A549 (cell line): ENCODE measurements at regions of chr17 and their contacts with region 1.

Region 1: GRCh38 chr17:57243171-57243948 is 13.0 kb upstream of the MSI2 start:
- DNase-seq: peak; percentile 77 to 88
- ATAC-seq: peak; percentile 83 to 95
- H3K4me3 ChIP-seq: no peak overlapping the region
- H3K27ac ChIP-seq: peak overlapping the region; percentile 15 to 47; a peak in 3 of 6 replicates
- H3K4me1 ChIP-seq: peaks cover 8% of the 10 kb centered on the region; the same call in 1 of the 3 replicates
- CTCF ChIP-seq: peak; percentile 100
- EP300 ChIP-seq: no peak
- POLR2A ChIP-seq: no peak
- RAD21 ChIP-seq: peak; percentile 99

Region 2: GRCh38 chr17:56457501-56457900 is 785.9 kb before region 1 on chr17:
- CTCF ChIA-PET with region 1: no interaction called
- POLR2A ChIA-PET with region 1: no interaction called
- DNase-seq: no peak
- ATAC-seq: no peak
- H3K4me3 ChIP-seq: no peak overlapping the region
- H3K27ac ChIP-seq: no peak overlapping the region
- H3K4me1 ChIP-seq: no peaks in the 10 kb centered on the region
- CTCF ChIP-seq: no peak
- EP300 ChIP-seq: no peak
- POLR2A ChIP-seq: no peak
- RAD21 ChIP-seq: no peak

Region 3: DNA sequence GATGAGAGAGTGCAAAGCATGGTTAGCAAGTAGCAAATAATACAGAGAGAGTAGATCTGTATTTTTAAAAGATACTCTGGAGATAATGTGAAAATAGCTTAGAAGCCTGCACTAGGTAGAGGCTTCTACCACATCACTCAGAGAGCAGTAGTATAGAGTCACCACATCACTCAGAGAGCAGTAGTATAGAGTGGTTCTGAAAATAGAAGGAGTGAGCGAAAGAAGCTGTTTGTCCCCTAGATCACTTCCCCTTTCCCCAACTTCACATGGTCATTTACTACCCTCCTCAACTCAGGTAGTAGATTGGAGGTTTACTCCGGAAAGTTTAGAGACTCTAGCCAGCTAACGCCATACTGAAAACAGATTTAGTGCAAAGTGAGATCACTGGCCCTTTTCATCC is 392.4 kb before region 1 on chr17:
- CTCF ChIA-PET with region 1: no interaction called
- POLR2A ChIA-PET with region 1: no interaction called
- DNase-seq: no peak
- ATAC-seq: 0 out of 6 replicates have a peak, but pooled peaks of 1 of the 2 experiments have one; percentile 39
- H3K4me3 ChIP-seq: no peak overlapping the region
- H3K27ac ChIP-seq: no peak overlapping the region
- H3K4me1 ChIP-seq: no peaks in the 10 kb centered on the region
- CTCF ChIP-seq: no peak
- EP300 ChIP-seq: no peak
- POLR2A ChIP-seq: no peak
- RAD21 ChIP-seq: no peak

Region 4: DNA sequence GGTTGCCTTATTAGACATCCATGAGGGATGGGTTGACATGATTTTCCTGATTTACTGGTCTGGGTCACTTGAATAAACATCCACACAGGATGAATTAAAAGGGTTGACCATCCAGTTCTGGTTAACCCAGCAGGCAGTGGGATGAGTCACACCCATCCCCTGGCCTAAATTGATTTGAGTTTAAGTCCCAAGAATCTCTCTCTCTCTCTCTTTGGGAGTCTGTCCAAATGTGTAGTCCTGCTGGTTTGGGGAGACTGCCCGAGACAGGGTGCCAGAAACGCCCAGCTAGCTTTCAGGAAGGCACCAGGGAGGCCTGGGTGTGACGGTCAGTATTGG is 226.6 kb before region 1 on chr17:
- CTCF ChIA-PET with region 1: no interaction called
- POLR2A ChIA-PET with region 1: no interaction called
- DNase-seq: no peak
- ATAC-seq: no peak
- H3K4me3 ChIP-seq: no peak overlapping the region
- H3K27ac ChIP-seq: no peak overlapping the region
- H3K4me1 ChIP-seq: peaks cover 7% of the 10 kb centered on the region
- CTCF ChIP-seq: no peak
- EP300 ChIP-seq: no peak
- POLR2A ChIP-seq: no peak
- RAD21 ChIP-seq: no peak

Region 5: GRCh38 chr17:57114085-57114673 is 129.2 kb before region 1 on chr17:
- CTCF ChIA-PET with region 1: no interaction called
- POLR2A ChIA-PET with region 1: no interaction called
- DNase-seq: peak; percentile 57 to 76
- ATAC-seq: peak; percentile 40 to 87; a peak in 3 of 6 replicates
- H3K4me3 ChIP-seq: no peak overlapping the region
- H3K27ac ChIP-seq: no peak overlapping the region
- H3K4me1 ChIP-seq: 0 out of 3 replicates have a peak, but pooled peaks cover under 1% of the 10 kb centered on the region
- CTCF ChIP-seq: peak; percentile 65
- EP300 ChIP-seq: no peak
- POLR2A ChIP-seq: no peak
- RAD21 ChIP-seq: peak; percentile 59 to 74

Region 6: GRCh38 chr17:57130761-57131461 is 112.4 kb before region 1 on chr17:
- CTCF ChIA-PET with region 1: interaction called, 23 read pairs
- POLR2A ChIA-PET with region 1: no interaction called
- DNase-seq: peak; percentile 82 to 99
- ATAC-seq: peak; percentile 95 to 96
- H3K4me3 ChIP-seq: peak overlapping the region; percentile 38
- H3K27ac ChIP-seq: peak overlapping the region; percentile 66 to 84
- H3K4me1 ChIP-seq: no peaks in the 10 kb centered on the region
- CTCF ChIP-seq: peak; percentile 99
- EP300 ChIP-seq: no peak
- POLR2A ChIP-seq: no peak
- RAD21 ChIP-seq: peak; percentile 92 to 100

Region 7: GRCh38 chr17:57271821-57272220 is 28.5 kb after region 1 on chr17:
- CTCF ChIA-PET with region 1: interaction called, 33 read pairs
- POLR2A ChIA-PET with region 1: no interaction called
- DNase-seq: no peak
- ATAC-seq: no peak
- H3K4me3 ChIP-seq: no peak overlapping the region
- H3K27ac ChIP-seq: no peak overlapping the region
- H3K4me1 ChIP-seq: no peaks in the 10 kb centered on the region
- CTCF ChIP-seq: no peak
- EP300 ChIP-seq: no peak
- POLR2A ChIP-seq: no peak
- RAD21 ChIP-seq: no peak

Region 8: GRCh38 chr17:57401556-57402488 is 158.5 kb after region 1 on chr17:
- CTCF ChIA-PET with region 1: interaction called, 37 read pairs
- POLR2A ChIA-PET with region 1: no interaction called
- DNase-seq: peak; percentile 29 to 47
- ATAC-seq: peak; percentile 27 to 71; a peak in 3 of 6 replicates
- H3K4me3 ChIP-seq: no peak overlapping the region
- H3K27ac ChIP-seq: peak overlapping the region; percentile 9 to 62; a peak in 4 of 6 replicates
- H3K4me1 ChIP-seq: peaks cover 27% of the 10 kb centered on the region
- CTCF ChIP-seq: 0 out of 3 replicates have a peak, but pooled peaks have one; percentile 11
- EP300 ChIP-seq: no peak
- POLR2A ChIP-seq: no peak
- RAD21 ChIP-seq: peak; percentile 31 to 48; a peak in 3 of 5 replicates

Region 9: DNA sequence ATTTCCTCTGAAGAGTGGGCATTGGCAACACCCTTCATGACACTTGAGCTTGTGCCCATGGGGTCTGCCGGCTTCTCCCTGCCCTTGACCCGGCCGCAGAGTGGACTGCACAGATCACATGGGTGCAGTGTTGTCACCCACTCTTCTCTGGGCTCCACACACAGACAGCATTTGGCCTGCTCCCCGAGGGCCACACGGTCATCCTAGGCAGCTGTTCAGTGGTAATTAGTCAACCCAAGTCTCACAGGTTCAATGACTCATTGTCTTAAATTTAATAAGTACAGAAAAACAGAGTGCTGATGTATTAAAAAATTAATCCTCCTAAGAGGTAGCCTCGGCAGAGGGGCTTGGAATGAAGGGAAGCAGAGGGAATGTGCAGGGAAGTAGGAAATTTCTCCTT is 217.7 kb after region 1 on chr17:
- CTCF ChIA-PET with region 1: interaction called, 12 read pairs
- POLR2A ChIA-PET with region 1: no interaction called
- DNase-seq: no peak
- ATAC-seq: no peak
- H3K4me3 ChIP-seq: no peak overlapping the region
- H3K27ac ChIP-seq: peak overlapping the region; percentile 78 to 85
- H3K4me1 ChIP-seq: peaks cover 59% of the 10 kb centered on the region
- CTCF ChIP-seq: no peak
- EP300 ChIP-seq: no peak
- POLR2A ChIP-seq: no peak
- RAD21 ChIP-seq: no peak

Region 10: DNA sequence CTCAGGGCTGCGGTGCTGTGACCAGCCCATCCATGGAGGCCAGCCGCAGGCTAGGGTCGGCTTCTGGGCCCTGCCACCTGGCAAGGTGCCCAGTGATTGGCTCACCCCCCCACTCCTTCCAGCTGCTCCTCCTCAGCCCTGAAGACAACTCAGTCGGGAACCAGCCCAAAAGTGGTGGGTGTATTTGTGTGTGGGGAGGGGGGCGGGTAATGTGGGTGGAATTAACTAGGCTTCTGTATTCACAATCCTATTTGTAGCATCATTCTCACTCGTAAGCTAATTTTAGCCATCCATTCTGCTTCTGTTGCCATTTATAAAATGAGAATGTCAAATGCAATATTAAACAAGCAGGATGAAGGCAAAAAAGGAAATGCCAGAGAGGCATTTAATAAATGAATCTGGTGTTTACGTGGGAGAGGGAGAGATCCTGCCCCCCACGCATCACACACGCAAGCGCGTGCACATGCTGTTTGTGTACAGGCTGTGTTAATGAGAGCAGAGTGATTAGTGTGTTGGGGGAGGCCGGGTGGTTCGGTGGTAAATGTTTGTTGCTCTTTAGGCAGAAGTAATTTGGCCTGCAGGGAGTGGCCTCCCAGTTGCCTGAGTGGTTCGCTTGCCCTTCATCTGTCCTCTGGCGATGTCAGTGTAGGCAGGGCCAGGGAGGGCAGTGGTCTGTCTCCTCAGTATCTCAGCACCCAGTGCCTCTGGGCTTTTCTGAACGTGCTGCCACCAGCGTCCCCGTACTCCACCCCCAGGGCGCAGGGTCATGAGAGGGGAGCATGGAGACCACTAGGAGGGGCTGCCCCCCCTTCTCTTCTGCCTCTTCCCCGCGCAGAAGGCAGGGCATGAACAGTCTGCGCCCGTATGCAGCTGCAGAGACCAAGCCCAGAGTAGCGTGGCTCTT is 361.7 kb after region 1 on chr17:
- CTCF ChIA-PET with region 1: interaction called, 12 read pairs
- POLR2A ChIA-PET with region 1: no interaction called
- DNase-seq: no peak
- ATAC-seq: no peak; a peak in 1 of 6 replicates
- H3K4me3 ChIP-seq: no peak overlapping the region
- H3K27ac ChIP-seq: no peak overlapping the region
- H3K4me1 ChIP-seq: peaks cover 20% of the 10 kb centered on the region
- CTCF ChIP-seq: no peak
- EP300 ChIP-seq: no peak
- POLR2A ChIP-seq: no peak
- RAD21 ChIP-seq: no peak

Region 11: GRCh38 chr17:57761887-57762286 is 518.5 kb after region 1 on chr17:
- CTCF ChIA-PET with region 1: interaction called, 10 read pairs
- POLR2A ChIA-PET with region 1: no interaction called
- DNase-seq: no peak
- ATAC-seq: no peak; a peak in 2 of 6 replicates
- H3K4me3 ChIP-seq: no peak overlapping the region
- H3K27ac ChIP-seq: 0 out of 6 replicates have a peak overlapping the region, but pooled peaks of 1 of the 2 experiments have one; percentile 6
- H3K4me1 ChIP-seq: peaks cover 15% of the 10 kb centered on the region
- CTCF ChIP-seq: no peak
- EP300 ChIP-seq: no peak
- POLR2A ChIP-seq: no peak
- RAD21 ChIP-seq: no peak